PC-9 (cell line): ENCODE measurements at regions of chr4 and their contacts with region 1.

Region 1: GRCh38 chr4:112523764-112524505 is 8.0 kb upstream of the NEUROG2 start:
- DNase-seq: peak; percentile 70 to 87
- H3K4me3 ChIP-seq: peak overlapping the region; percentile 60
- H3K27ac ChIP-seq: no peak overlapping the region
- H3K4me1 ChIP-seq: 0 out of 2 replicates have a peak, but pooled peaks cover 4% of the 10 kb centered on the region
- H3K27me3 ChIP-seq: no peaks in the 10 kb centered on the region; the same call in 1 of the 2 replicates
- CTCF ChIP-seq: peak; percentile 97

Region 2: GRCh38 chr4:111943795-111944203 is 580.1 kb before region 1 on chr4:
- CTCF ChIA-PET with region 1: no interaction called
- POLR2A ChIA-PET with region 1: no interaction called
- intact Hi-C with region 1: loop called (anchors 5 kb)
- DNase-seq: peak in 1 of 2 experiments; percentile 39
- H3K4me3 ChIP-seq: no peak overlapping the region
- H3K27ac ChIP-seq: no peak overlapping the region
- H3K4me1 ChIP-seq: no peaks in the 10 kb centered on the region
- H3K27me3 ChIP-seq: no peaks in the 10 kb centered on the region
- CTCF ChIP-seq: peak; percentile 63

Region 3: GRCh38 chr4:112099701-112100297 is 424.1 kb before region 1 on chr4:
- CTCF ChIA-PET with region 1: no interaction called
- POLR2A ChIA-PET with region 1: no interaction called
- intact Hi-C with region 1: loop called (anchors 2 kb)
- DNase-seq: peak in 1 of 2 experiments; percentile 63
- H3K4me3 ChIP-seq: no peak overlapping the region
- H3K27ac ChIP-seq: no peak overlapping the region
- H3K4me1 ChIP-seq: peaks cover 5% of the 10 kb centered on the region; the same call in 1 of the 2 replicates
- H3K27me3 ChIP-seq: no peaks in the 10 kb centered on the region
- CTCF ChIP-seq: peak; percentile 87

Region 4: GRCh38 chr4:112214390-112215264 is 309.3 kb before region 1 on chr4:
- CTCF ChIA-PET with region 1: no interaction called
- POLR2A ChIA-PET with region 1: no interaction called
- intact Hi-C with region 1: loop called (anchors 2 kb)
- DNase-seq: peak in 1 of 2 experiments; percentile 43
- H3K4me3 ChIP-seq: no peak overlapping the region
- H3K27ac ChIP-seq: peak overlapping the region; percentile 22
- H3K4me1 ChIP-seq: no peaks in the 10 kb centered on the region
- H3K27me3 ChIP-seq: no peaks in the 10 kb centered on the region
- CTCF ChIP-seq: peak; percentile 65; the same call in 1 of the 2 replicates

Region 5: DNA sequence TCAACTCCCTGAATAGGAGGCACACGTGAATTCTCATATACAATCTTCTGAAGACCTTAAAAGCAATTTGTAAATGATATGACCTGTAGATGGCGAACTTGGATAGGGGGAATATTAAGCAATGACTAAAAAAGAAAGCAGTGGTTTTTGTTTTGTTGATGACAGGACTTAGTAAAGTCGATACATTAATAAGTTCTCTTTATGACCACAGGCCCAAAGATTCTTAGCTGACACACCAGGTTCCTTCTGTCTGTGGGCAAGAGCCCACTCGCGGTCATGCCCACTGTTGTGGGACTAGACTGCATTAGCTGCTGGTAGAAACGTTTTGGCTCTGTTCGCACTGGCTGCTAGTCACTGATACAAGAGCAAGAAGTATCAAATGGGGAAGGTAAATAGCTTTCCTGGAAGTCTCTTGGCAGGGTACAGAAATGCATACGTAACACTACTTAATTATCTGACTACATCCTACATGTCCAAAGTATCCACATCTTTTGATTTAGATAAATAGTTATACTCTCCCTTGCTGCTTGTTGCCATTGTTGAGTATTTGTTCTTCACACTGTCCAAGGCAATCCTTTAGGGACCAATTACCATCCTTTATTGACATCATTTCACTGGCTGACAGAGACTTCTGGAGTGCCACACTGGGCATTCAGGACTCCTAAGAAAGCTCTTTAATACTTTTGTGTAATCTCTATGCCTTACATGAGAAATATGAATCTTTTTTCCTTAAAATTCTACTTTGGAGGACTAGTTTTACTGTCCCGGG is 195.8 kb before region 1 on chr4:
- CTCF ChIA-PET with region 1: no interaction called
- POLR2A ChIA-PET with region 1: no interaction called
- intact Hi-C with region 1: loop called (anchors 1 kb)
- DNase-seq: peak in 1 of 2 experiments; percentile 39
- H3K4me3 ChIP-seq: no peak overlapping the region
- H3K27ac ChIP-seq: no peak overlapping the region
- H3K4me1 ChIP-seq: no peaks in the 10 kb centered on the region
- H3K27me3 ChIP-seq: no peaks in the 10 kb centered on the region
- CTCF ChIP-seq: peak; percentile 71

Region 6: GRCh38 chr4:112509243-112510141 is 14.4 kb before region 1 on chr4:
- CTCF ChIA-PET with region 1: no interaction called
- POLR2A ChIA-PET with region 1: no interaction called
- intact Hi-C with region 1: no loop called
- DNase-seq: peak in 1 of 2 experiments; percentile 41
- H3K4me3 ChIP-seq: no peak overlapping the region
- H3K27ac ChIP-seq: no peak overlapping the region
- H3K4me1 ChIP-seq: no peaks in the 10 kb centered on the region
- H3K27me3 ChIP-seq: peaks cover 21% of the 10 kb centered on the region; the same call in 1 of the 2 replicates
- CTCF ChIP-seq: no peak

Region 7: GRCh38 chr4:112546476-112546875 is 22.5 kb after region 1 on chr4:
- CTCF ChIA-PET with region 1: no interaction called
- POLR2A ChIA-PET with region 1: no interaction called
- intact Hi-C with region 1: no loop called
- DNase-seq: no peak
- H3K4me3 ChIP-seq: no peak overlapping the region
- H3K27ac ChIP-seq: no peak overlapping the region
- H3K4me1 ChIP-seq: no peaks in the 10 kb centered on the region
- H3K27me3 ChIP-seq: no peaks in the 10 kb centered on the region
- CTCF ChIP-seq: no peak